ENCODE measurements at regions of chr20 and their contacts with region 1.

Region 1: DNA sequence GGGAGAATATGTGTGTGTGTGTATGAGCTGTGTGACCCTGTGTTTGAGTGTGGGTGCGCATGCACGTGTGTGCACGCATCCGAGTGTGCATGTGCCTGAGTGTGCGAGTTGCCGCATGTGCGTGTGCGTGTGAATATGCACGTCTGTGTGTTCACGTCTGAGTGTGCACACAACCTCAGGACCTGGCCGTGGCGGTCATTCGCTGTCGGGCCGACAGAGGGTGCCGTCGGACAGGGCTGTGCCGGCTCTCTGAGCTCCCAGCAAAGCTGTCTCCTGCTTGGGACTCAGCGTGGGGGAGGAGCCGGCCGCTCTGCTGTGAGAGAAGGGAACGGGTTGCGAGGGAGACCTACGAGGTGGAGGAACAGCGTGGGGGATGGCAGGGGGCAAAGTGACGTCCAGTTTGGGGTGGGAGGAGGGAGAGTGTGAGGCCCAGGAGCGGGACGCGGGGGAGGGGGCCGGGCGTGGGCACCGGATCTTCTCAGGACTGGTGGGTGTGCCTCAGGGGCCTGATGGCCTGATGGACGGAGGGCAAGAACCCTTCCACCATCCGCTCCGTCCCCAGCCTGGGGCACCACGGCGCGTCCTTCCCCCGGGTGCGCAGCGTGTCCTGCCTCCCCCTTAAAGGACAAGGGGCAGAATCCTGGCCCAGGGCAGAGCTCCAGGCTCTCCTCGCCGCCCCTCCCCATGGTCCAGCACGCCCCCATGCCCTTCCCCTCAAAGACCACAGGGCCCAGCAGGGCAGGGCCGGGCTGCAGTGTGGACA is 19.9 kb downstream of the SLC17A9 start:
- DNase-seq: peak; percentile 55 to 90 (median 78)
- ATAC-seq: peak; percentile 95 to 99 (median 96)
- H3K4me3 ChIP-seq: peak overlapping the region; percentile 19 to 28
- H3K4me3 Mint-ChIP-seq: peak overlapping the region; percentile 65 to 73 (median 68)
- H3K27ac ChIP-seq: no peak overlapping the region
- H3K27ac Mint-ChIP-seq: no peak overlapping the region
- H3K4me1 ChIP-seq: peaks cover 0 to 22% of the 10 kb centered on the region in 2 experiments
- H3K4me1 Mint-ChIP-seq: peaks cover 16 to 24% (median 16%) of the 10 kb centered on the region in 3 donors
- H3K27me3 ChIP-seq: peaks cover 0 to 75% of the 10 kb centered on the region in 2 experiments
- H3K27me3 Mint-ChIP-seq: peaks cover 22 to 43% of the 10 kb centered on the region in 2 donors

Region 2: GRCh38 chr20:62675156-62675876 is 297.1 kb before region 1 on chr20:
- CTCF ChIA-PET with region 1: no interaction called
- POLR2A ChIA-PET with region 1: no interaction called
- DNase-seq: peak in 1 of 35 experiments; percentile 25
- ATAC-seq: no peak
- H3K4me3 ChIP-seq: no peak overlapping the region
- H3K4me3 Mint-ChIP-seq: no peak overlapping the region
- H3K27ac ChIP-seq: no peak overlapping the region
- H3K27ac Mint-ChIP-seq: no peak overlapping the region
- H3K4me1 ChIP-seq: peaks cover 0 to 6% of the 10 kb centered on the region in 2 experiments
- H3K4me1 Mint-ChIP-seq: peaks cover 5 to 7% (median 5%) of the 10 kb centered on the region in 3 donors
- H3K27me3 ChIP-seq: peaks cover 0 to 11% of the 10 kb centered on the region in 2 experiments
- H3K27me3 Mint-ChIP-seq: no peaks in the 10 kb centered on the region

Region 3: GRCh38 chr20:63009045-63009961 is 36.9 kb after region 1 on chr20:
- CTCF ChIA-PET with region 1: interaction called, 9 to 18 read pairs
- POLR2A ChIA-PET with region 1: no interaction called
- DNase-seq: peak; percentile 57 to 92 (median 78)
- ATAC-seq: peak; percentile 68 to 78 (median 75)
- H3K4me3 ChIP-seq: peak overlapping the region; percentile 53 to 56
- H3K4me3 Mint-ChIP-seq: peak overlapping the region; percentile 77 to 86 (median 81)
- H3K27ac ChIP-seq: no peak overlapping the region
- H3K27ac Mint-ChIP-seq: peak overlapping the region in 1 of 2 donors; percentile 39
- H3K4me1 ChIP-seq: peaks cover 8 to 61% of the 10 kb centered on the region in 2 experiments
- H3K4me1 Mint-ChIP-seq: peaks cover 21 to 35% (median 29%) of the 10 kb centered on the region in 3 donors
- H3K27me3 ChIP-seq: peaks cover 4 to 63% of the 10 kb centered on the region in 2 experiments
- H3K27me3 Mint-ChIP-seq: peaks cover 15 to 46% of the 10 kb centered on the region in 2 donors